ENCODE measurements at regions of chr1 and their contacts with region 1.

Region 1: DNA sequence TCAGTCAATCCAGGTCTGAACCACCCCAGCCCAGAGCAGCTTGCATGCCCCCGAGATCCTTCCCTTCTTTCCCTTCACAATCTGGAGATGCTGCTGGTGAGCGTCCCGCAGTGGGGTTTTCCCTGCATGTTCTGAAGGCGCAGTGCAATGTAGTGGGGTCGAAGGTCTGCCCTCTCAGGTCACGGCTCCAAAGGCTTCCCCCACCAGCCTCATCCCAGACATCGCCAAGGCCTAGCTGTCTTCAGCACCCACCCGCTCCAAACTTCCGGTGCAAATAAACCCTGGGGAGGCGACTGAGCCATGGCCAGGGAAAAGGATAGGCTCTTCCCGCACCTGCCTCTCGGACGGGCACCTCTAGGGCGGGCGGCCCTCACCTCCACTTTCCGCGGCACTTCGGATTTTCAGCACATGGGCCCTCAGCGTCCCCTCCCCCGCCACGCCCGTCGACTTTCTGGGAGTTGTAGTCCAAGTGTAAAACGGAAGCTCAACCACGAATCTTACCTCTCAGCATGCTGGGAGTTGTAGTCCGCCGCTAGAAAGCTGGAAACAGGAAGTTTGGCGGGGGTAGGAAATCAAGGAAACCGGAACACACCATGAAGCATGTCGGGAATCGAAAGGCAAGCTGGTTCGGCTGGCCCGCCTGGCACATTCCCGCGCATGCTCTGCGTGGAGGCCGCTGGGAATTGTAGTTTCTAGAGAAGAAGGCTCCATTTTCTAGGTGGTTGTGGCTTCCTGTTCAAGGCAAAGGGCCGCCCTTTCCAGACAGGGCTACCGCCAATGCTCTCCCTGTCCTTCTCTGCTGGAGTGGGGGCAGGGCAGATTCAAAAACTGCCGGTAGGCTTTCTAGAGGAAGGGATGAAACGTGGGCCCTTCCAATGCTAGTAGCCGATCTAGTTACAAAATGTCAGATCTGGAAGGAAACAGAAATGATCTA is at the start of gene MRPL24:
- DNase-seq: peak; percentile 98

Region 2: GRCh38 chr1:156751758-156752757 is 11.1 kb after region 1 on chr1:
- CTCF ChIA-PET with region 1: interaction called, 4 read pairs
- POLR2A ChIA-PET with region 1: interaction called, 60 read pairs
- DNase-seq: peak; percentile 93

Region 3: GRCh38 chr1:156772728-156773497 is 32.0 kb after region 1 on chr1:
- CTCF ChIA-PET with region 1: interaction called, 3 read pairs
- POLR2A ChIA-PET with region 1: interaction called, 123 read pairs
- DNase-seq: no peak

Region 4: DNA sequence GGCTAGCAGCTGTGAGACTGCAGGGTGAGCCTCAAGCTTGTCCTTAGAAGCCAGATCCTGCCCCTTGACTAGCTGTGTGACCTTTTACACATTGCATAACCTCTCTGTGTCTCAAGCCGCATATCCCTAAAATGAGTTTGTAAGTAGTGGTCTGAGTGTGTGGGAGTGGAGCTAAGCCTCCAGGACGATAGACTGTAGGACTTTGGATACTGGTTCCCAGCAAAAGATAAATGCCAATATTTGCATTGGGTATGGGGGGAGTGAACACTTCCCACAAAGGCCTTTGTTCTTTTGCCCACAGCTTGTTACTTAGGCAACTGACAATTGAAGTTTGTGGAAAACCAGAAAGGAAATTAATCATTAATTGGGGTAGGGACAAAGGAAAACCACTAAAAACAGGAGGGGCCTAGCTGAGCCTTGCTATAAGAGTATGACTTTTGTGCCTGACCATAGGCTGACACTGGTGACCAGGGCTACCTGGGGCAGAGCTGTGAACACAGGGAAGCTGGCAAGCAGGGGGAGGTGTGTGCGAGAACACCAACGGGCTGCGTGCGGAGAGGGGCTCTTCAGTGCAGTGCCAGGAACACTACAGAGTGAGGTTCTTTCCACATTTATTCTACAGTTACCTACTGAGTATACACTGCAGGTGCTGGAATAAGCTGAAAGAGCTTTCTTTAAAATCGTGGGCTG is 499.7 kb after region 1 on chr1:
- CTCF ChIA-PET with region 1: no interaction called
- POLR2A ChIA-PET with region 1: no interaction called
- DNase-seq: no peak